ENCODE measurements at regions of chr15 and their contacts with region 1.

Region 1: GRCh38 chr15:71780115-71780976 is 30.0 kb upstream of the NR2E3 start:
- DNase-seq: peak; percentile 84 to 90
- ATAC-seq: peak; percentile 59 to 80
- H3K4me3 ChIP-seq: no peak overlapping the region
- H3K27ac ChIP-seq: peak overlapping the region; percentile 72 to 75
- H3K4me1 ChIP-seq: peaks cover 26% of the 10 kb centered on the region
- CTCF ChIP-seq: peak; percentile 93
- EP300 ChIP-seq: no peak
- POLR2A ChIP-seq: no peak
- RAD21 ChIP-seq: peak; percentile 67 to 77

Region 2: DNA sequence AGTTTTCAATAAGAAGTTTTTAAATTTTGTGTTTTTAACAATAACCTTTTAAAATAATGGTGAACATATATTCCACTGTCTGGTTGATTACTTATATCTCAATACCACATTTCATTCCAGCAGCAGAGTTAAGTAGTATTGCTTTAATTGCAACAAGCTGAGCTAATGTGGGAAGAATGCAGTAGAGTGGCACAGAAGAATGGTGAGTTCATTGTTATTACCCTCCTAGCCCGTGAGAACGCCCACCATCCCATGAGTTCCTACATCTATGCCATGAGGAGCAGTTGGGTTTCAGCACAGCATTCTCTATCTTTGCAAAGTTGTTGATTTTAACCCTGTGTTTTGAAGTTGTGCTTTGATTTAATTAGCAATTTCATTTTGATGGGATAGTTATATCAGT is 12.2 kb after region 1 on chr15:
- CTCF ChIA-PET with region 1: interaction called, 119 read pairs
- POLR2A ChIA-PET with region 1: no interaction called
- DNase-seq: peak in 1 of 2 experiments; percentile 46
- ATAC-seq: no peak
- H3K4me3 ChIP-seq: no peak overlapping the region
- H3K27ac ChIP-seq: peak overlapping the region; percentile 64 to 83; a peak in 4 of 6 replicates
- H3K4me1 ChIP-seq: peaks cover 32% of the 10 kb centered on the region
- CTCF ChIP-seq: no peak
- EP300 ChIP-seq: no peak
- POLR2A ChIP-seq: no peak
- RAD21 ChIP-seq: no peak

Region 3: GRCh38 chr15:71806452-71806931 is 26.1 kb after region 1 on chr15:
- CTCF ChIA-PET with region 1: interaction called, 119 read pairs
- POLR2A ChIA-PET with region 1: no interaction called
- DNase-seq: peak in 1 of 2 experiments; percentile 49
- ATAC-seq: peak in 1 of 2 experiments; percentile 30; a peak in 3 of 6 replicates
- H3K4me3 ChIP-seq: no peak overlapping the region
- H3K27ac ChIP-seq: peak overlapping the region; percentile 77 to 84
- H3K4me1 ChIP-seq: peaks cover 48% of the 10 kb centered on the region
- CTCF ChIP-seq: no peak
- EP300 ChIP-seq: peak in 1 of 2 experiments; percentile 38; a peak in 2 of 5 replicates
- POLR2A ChIP-seq: no peak
- RAD21 ChIP-seq: no peak

Measured in A549 (cell line).